ENCODE measurements at regions of chr20 and their contacts with region 1.

Region 1: DNA sequence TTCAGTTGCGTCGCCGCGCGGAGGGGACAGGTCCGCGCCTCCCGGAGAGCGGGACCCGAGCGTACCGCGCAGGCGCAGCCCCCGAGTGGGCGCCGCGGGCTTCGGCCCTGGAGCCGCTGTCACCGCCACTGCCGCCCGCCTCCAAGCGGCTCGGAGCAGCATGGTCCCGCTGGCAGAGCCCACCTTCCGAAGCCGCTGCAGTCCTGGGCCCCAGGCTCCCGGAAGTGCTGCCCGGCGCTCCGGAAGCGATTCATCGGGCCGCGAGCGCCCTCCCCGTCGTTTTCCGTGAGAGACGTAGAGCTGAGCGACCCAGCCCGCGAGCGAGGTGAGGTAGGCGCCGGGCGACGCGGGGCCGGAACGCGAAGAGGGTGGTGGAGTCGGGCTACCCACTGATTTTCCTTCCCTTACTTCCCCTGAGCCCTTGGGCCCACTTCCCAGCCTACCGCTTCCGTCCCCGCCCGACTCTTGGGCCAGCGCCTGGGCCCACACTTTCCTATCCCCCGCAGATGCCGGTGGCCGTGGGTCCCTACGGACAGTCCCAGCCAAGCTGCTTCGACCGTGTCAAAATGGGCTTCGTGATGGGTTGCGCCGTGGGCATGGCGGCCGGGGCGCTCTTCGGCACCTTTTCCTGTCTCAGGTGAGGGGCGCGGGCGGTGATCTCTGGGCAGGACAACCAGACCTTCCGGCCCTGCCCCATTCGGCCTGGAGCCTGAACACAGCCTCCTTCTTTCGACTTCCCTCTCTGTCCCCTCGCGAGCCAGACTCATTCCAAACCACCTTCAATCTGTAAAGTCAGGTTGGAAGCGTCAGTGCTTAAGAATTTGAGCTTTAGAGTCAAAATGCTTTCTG is at the starts of genes NFS1 and ROMO1:
- DNase-seq: peak; percentile 94
- ATAC-seq: peak; percentile 84
- H3K4me3 ChIP-seq: peak within 1 kb of the TSS; percentile 90 to 98 (median 96)
- H3K27ac ChIP-seq: peak within 1 kb of the TSS; percentile 88
- H3K4me1 ChIP-seq: peaks cover 49% of the 10 kb centered on the region
- H3K27me3 ChIP-seq: no peaks in the 10 kb centered on the region; a peak in 1 of 5 replicates
- CTCF ChIP-seq: peak; percentile 94
- EP300 ChIP-seq: peak; percentile 19 to 54; a peak in 3 of 4 replicates
- POLR2A ChIP-seq: peak; percentile 93 to 96
- RAD21 ChIP-seq: peak; percentile 96
- total RNA-seq, gene NFS1: 88.1 and 94.4 TPM in 2 replicates
- total RNA-seq, gene ROMO1: 636 and 726 TPM in 2 replicates

Region 2: DNA sequence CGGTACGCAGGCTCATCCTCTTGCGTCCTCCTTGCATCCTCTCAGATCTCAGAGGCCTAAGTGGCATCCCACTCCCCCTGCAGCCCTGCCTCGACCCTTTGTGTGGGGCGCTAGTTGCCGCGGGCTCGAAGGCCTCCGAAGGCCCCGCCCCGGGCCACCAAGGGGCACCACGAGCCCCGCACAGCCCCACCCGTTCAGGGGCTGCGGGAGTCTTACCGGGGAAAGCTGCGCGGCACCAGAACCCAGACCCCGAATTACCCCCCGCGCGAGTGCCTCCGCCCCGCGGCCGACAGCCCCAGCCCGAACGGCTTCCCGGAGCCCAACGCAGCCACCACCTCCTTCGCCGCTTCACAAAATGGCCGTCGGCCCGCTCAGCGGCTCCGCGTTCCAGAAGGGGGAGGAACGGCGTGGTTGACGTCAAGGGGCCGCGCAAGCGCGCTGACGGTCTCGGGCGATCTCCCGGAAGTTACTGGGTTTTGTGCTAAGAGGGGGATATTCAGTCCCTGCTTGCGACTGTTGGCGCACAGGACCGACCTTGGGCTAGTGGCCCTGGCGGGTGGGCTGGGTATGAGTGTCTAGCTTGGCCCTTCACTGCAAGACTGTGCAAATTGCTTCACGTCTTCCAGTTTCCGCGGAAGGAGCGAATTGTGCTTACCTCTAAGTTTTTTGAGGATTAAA is 34.7 kb before region 1 on chr20 and contains the starts of genes CPNE1 and RBM12:
- CTCF ChIA-PET with region 1: no interaction called
- POLR2A ChIA-PET with region 1: interaction called, 20 read pairs
- in situ Hi-C with region 1: no loop called
- intact Hi-C with region 1: loop called (anchors 2 kb)
- DNase-seq: peak; percentile 96
- ATAC-seq: peak; percentile 92
- H3K4me3 ChIP-seq: peak within 1 kb of the TSS; percentile 76 to 99 (median 79)
- H3K27ac ChIP-seq: peak within 1 kb of the TSS; percentile 90
- H3K4me1 ChIP-seq: peaks cover 41% of the 10 kb centered on the region
- H3K27me3 ChIP-seq: no peaks in the 10 kb centered on the region; a peak in 1 of 5 replicates
- CTCF ChIP-seq: peak; percentile 30; the same call in 1 of the 2 replicates
- EP300 ChIP-seq: no peak; a peak in 1 of 4 replicates
- POLR2A ChIP-seq: peak; percentile 96 to 99
- RAD21 ChIP-seq: peak; percentile 71
- total RNA-seq, gene CPNE1: 431 and 439 TPM in 2 replicates
- total RNA-seq, gene RBM12: 104 and 111 TPM in 2 replicates

Region 3: GRCh38 chr20:35718972-35719635 is 19.8 kb after region 1 on chr20:
- CTCF ChIA-PET with region 1: no interaction called
- POLR2A ChIA-PET with region 1: interaction called, 319 read pairs
- in situ Hi-C with region 1: no loop called
- intact Hi-C with region 1: no loop called
- DNase-seq: no peak
- ATAC-seq: peak; percentile 1; the same call in 2 of the 3 replicates
- H3K4me3 ChIP-seq: no peak overlapping the region
- H3K27ac ChIP-seq: no peak overlapping the region
- H3K4me1 ChIP-seq: 0 out of 2 replicates have a peak, but pooled peaks cover 5% of the 10 kb centered on the region
- H3K27me3 ChIP-seq: no peaks in the 10 kb centered on the region
- CTCF ChIP-seq: no peak
- EP300 ChIP-seq: no peak
- POLR2A ChIP-seq: no peak; a peak in 1 of 4 replicates
- RAD21 ChIP-seq: no peak

Region 4: GRCh38 chr20:35771689-35772562 is 72.6 kb after region 1 on chr20 and contains the start of gene PHF20:
- CTCF ChIA-PET with region 1: no interaction called
- POLR2A ChIA-PET with region 1: interaction called, 11 read pairs
- in situ Hi-C with region 1: no loop called
- intact Hi-C with region 1: no loop called
- DNase-seq: peak; percentile 93
- ATAC-seq: peak; percentile 97
- H3K4me3 ChIP-seq: peak within 1 kb of the TSS; percentile 76 to 85 (median 81)
- H3K27ac ChIP-seq: peak within 1 kb of the TSS; percentile 46
- H3K4me1 ChIP-seq: peaks cover 68% of the 10 kb centered on the region
- H3K27me3 ChIP-seq: no peaks in the 10 kb centered on the region; a peak in 1 of 5 replicates
- CTCF ChIP-seq: 0 out of 2 replicates have a peak, but pooled peaks have one; percentile 16
- EP300 ChIP-seq: no peak
- POLR2A ChIP-seq: peak; percentile 86 to 89
- RAD21 ChIP-seq: peak; percentile 79; the same call in 1 of the 2 replicates
- total RNA-seq, gene PHF20: 34.1 and 43.3 TPM in 2 replicates

Measured in HepG2 (cell line).